ENCODE measurements at regions of chr3 and their contacts with region 1.

Region 1: GRCh38 chr3:127544192-127544802 is 46.2 kb downstream of the TPRA1 start:
- DNase-seq: peak; percentile 82

Region 2: DNA sequence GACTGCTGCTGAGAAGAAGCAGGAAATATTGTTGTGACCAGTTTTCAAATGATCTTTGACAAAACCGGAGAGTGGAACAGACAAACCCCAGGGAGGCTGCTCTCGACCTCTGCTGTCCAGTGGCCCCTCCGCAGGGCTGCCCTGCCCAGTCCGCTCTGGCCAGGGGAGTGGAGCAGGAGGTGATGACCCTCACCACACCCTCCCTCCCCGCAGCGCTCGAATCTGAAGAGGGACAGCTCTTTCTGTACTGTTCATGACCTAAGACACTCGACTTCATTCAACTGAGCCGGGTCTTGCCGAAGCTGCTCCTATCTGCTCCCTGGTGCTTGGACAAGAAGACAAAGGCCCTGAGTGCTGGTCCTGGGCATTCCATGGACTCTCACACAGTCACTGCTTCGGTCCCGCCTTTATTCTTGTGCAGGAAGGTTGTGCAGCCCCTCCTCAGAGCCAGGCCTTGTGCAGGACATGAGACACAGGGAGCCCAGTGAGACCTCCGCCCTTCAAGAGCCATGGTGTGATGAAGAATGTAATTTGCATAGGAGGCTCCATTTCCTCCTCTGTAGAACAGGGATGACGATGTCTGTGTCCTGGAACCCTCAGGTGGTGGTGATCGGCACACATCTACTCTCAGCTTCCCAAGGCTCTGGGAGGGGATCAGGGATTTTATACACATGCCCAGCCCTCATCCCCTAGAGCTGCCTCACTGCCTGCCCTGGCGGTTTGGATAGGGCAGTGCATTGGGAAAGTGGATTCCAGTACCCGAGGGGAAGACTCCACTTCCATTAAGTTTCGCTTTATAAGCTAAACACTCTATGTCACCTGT is 159.4 kb before region 1 on chr3:
- intact Hi-C with region 1: no loop called
- DNase-seq: no peak

Region 3: GRCh38 chr3:127455541-127456450 is 88.5 kb before region 1 on chr3:
- intact Hi-C with region 1: loop called (anchors 5 kb)
- DNase-seq: peak; percentile 81